MCF 10A (cell line): ENCODE measurements at regions of chr7 and their contacts with region 1.

Region 1: GRCh38 chr7:17769918-17770317 is 170.4 kb downstream of the SNX13 start:
- DNase-seq: peak; percentile 76
- H3K4me3 Mint-ChIP-seq: no peak overlapping the region
- H3K27ac Mint-ChIP-seq: no peak overlapping the region
- H3K4me1 Mint-ChIP-seq: peaks cover 35% of the 10 kb centered on the region
- H3K27me3 Mint-ChIP-seq: no peaks in the 10 kb centered on the region
- CTCF ChIP-seq: peak; percentile 77

Region 2: GRCh38 chr7:17183630-17184328 is 586.1 kb before region 1 on chr7:
- CTCF ChIA-PET with region 1: no interaction called
- POLR2A ChIA-PET with region 1: no interaction called
- intact Hi-C with region 1: no loop called
- DNase-seq: no peak
- H3K4me3 Mint-ChIP-seq: no peak overlapping the region
- H3K27ac Mint-ChIP-seq: no peak overlapping the region
- H3K4me1 Mint-ChIP-seq: no peaks in the 10 kb centered on the region
- H3K27me3 Mint-ChIP-seq: no peaks in the 10 kb centered on the region
- CTCF ChIP-seq: no peak

Region 3: DNA sequence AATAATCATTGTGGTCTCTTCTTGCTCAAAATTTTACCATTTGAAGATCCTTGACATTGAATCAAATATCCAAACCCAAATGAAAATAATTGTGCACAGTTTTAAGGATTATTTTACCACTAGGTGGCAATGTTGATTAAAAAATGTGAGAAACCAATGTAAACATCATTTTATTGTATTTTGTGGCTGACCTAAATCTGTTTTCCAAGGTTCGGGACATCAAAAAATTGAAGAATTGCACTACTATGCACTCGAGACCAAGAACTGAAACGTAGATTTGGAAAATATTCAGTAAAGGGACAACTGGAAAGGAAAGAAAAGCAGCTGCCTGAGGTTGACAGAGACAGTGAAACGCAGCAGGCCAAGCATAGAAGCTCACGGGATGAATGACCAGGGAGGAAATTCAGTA is 89.0 kb before region 1 on chr7:
- CTCF ChIA-PET with region 1: interaction called, 12 read pairs
- POLR2A ChIA-PET with region 1: interaction called, 4 read pairs
- intact Hi-C with region 1: no loop called
- DNase-seq: peak; percentile 41
- H3K4me3 Mint-ChIP-seq: peak overlapping the region; percentile 37
- H3K27ac Mint-ChIP-seq: peak overlapping the region; percentile 95
- H3K4me1 Mint-ChIP-seq: peaks cover 69% of the 10 kb centered on the region
- H3K27me3 Mint-ChIP-seq: no peaks in the 10 kb centered on the region
- CTCF ChIP-seq: peak; percentile 35

Region 4: DNA sequence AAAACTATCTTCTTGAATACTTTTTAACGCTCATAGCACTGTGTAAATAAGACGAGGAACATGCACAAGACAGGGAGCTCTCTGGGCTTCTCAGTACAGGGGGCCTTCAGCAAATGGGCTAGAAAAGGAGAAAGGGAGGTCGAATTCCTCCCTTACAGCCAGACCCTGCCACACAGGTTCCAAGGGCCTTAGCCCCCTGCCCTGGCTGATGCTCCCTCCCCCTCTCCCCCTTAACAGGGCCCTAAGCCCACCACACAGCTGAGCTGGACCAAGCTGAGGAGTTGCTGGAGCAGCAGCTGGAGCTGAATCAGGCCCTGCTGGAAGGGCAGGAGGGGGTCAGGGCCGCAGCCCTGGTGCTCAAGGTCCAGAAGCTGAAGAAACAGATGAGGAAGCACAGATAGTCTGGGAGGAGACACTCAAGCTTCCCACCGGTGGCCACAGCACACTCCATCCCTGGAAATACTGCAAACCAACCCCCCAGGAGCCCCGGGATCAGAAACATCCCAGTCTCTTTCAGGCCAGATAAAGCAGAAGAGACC is 16.5 kb after region 1 on chr7:
- CTCF ChIA-PET with region 1: interaction called, 4 read pairs
- POLR2A ChIA-PET with region 1: interaction called, 30 read pairs
- intact Hi-C with region 1: no loop called
- DNase-seq: no peak
- H3K4me3 Mint-ChIP-seq: no peak overlapping the region
- H3K27ac Mint-ChIP-seq: no peak overlapping the region
- H3K4me1 Mint-ChIP-seq: peaks cover 13% of the 10 kb centered on the region
- H3K27me3 Mint-ChIP-seq: no peaks in the 10 kb centered on the region
- CTCF ChIP-seq: no peak

Region 5: GRCh38 chr7:17962652-17963051 is 192.7 kb after region 1 on chr7:
- CTCF ChIA-PET with region 1: interaction called, 10 read pairs
- POLR2A ChIA-PET with region 1: interaction called, 3 read pairs
- intact Hi-C with region 1: no loop called
- DNase-seq: no peak
- H3K4me3 Mint-ChIP-seq: no peak overlapping the region
- H3K27ac Mint-ChIP-seq: no peak overlapping the region
- H3K4me1 Mint-ChIP-seq: no peaks in the 10 kb centered on the region
- H3K27me3 Mint-ChIP-seq: no peaks in the 10 kb centered on the region
- CTCF ChIP-seq: no peak

Region 6: GRCh38 chr7:18292584-18292983 is 522.7 kb after region 1 on chr7:
- CTCF ChIA-PET with region 1: interaction called, 10 read pairs
- POLR2A ChIA-PET with region 1: no interaction called
- intact Hi-C with region 1: no loop called
- DNase-seq: no peak
- H3K4me3 Mint-ChIP-seq: no peak overlapping the region
- H3K27ac Mint-ChIP-seq: no peak overlapping the region
- H3K4me1 Mint-ChIP-seq: peaks cover 6% of the 10 kb centered on the region
- H3K27me3 Mint-ChIP-seq: no peaks in the 10 kb centered on the region
- CTCF ChIP-seq: no peak

Region 7: GRCh38 chr7:18345641-18346234 is 575.8 kb after region 1 on chr7:
- CTCF ChIA-PET with region 1: interaction called, 15 read pairs
- POLR2A ChIA-PET with region 1: no interaction called
- intact Hi-C with region 1: loop called (anchors 1 kb)
- DNase-seq: peak; percentile 78
- H3K4me3 Mint-ChIP-seq: no peak overlapping the region
- H3K27ac Mint-ChIP-seq: no peak overlapping the region
- H3K4me1 Mint-ChIP-seq: no peaks in the 10 kb centered on the region
- H3K27me3 Mint-ChIP-seq: no peaks in the 10 kb centered on the region
- CTCF ChIP-seq: peak; percentile 74